A549 (cell line): ENCODE measurements at regions of chr5 and their contacts with region 1.

Region 1: GRCh38 chr5:58849921-58850667 is 267.2 kb downstream of the RAB3C start:
- DNase-seq: peak; percentile 54 to 64
- ATAC-seq: peak; percentile 92 to 94
- H3K4me3 ChIP-seq: no peak overlapping the region
- H3K27ac ChIP-seq: no peak overlapping the region
- H3K4me1 ChIP-seq: peaks cover 8% of the 10 kb centered on the region; the same call in 2 of the 3 replicates
- CTCF ChIP-seq: peak; percentile 60
- EP300 ChIP-seq: no peak
- POLR2A ChIP-seq: no peak
- RAD21 ChIP-seq: peak; percentile 79 to 83

Region 2: DNA sequence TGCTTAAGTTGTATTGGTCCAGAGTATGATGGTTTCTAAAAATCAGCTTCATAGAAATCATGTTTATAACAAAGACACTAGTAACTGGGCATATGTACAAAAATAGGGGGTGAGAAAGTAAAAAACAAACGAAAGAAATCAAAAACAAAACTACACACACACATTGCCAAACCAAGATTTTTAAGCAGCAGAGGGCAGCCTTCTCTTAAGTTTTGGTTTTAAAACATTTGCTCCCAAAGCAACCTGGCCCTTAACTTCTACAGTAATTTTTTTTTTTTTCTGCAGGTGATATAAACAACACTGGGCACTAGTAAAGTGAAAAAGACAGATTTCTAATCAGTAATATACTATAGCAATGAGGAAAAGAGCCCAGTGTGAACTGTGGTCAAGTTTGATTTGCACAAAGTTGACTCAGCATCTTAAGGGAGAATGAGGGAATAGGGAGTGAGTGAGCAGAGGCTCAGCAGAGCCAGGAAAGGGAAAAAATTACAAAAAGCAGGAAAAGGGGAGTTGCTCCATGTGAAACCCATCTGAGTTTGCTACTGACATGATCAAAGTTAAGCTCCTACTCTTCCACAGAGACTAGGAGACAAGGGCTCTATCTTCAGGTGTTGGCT is 372.2 kb before region 1 on chr5:
- CTCF ChIA-PET with region 1: interaction called, 80 read pairs
- POLR2A ChIA-PET with region 1: no interaction called
- DNase-seq: no peak
- ATAC-seq: peak in 1 of 2 experiments; percentile 61; a peak in 3 of 6 replicates
- H3K4me3 ChIP-seq: no peak overlapping the region
- H3K27ac ChIP-seq: no peak overlapping the region
- H3K4me1 ChIP-seq: 0 out of 3 replicates have a peak, but pooled peaks cover 3% of the 10 kb centered on the region
- CTCF ChIP-seq: peak; percentile 70
- EP300 ChIP-seq: no peak
- POLR2A ChIP-seq: no peak
- RAD21 ChIP-seq: peak; percentile 68 to 75

Region 3: GRCh38 chr5:58484505-58484904 is 365.6 kb before region 1 on chr5:
- CTCF ChIA-PET with region 1: interaction called, 266 read pairs
- POLR2A ChIA-PET with region 1: no interaction called
- DNase-seq: no peak
- ATAC-seq: no peak
- H3K4me3 ChIP-seq: no peak overlapping the region
- H3K27ac ChIP-seq: no peak overlapping the region
- H3K4me1 ChIP-seq: no peaks in the 10 kb centered on the region
- CTCF ChIP-seq: no peak
- EP300 ChIP-seq: no peak
- POLR2A ChIP-seq: no peak
- RAD21 ChIP-seq: no peak

Region 4: DNA sequence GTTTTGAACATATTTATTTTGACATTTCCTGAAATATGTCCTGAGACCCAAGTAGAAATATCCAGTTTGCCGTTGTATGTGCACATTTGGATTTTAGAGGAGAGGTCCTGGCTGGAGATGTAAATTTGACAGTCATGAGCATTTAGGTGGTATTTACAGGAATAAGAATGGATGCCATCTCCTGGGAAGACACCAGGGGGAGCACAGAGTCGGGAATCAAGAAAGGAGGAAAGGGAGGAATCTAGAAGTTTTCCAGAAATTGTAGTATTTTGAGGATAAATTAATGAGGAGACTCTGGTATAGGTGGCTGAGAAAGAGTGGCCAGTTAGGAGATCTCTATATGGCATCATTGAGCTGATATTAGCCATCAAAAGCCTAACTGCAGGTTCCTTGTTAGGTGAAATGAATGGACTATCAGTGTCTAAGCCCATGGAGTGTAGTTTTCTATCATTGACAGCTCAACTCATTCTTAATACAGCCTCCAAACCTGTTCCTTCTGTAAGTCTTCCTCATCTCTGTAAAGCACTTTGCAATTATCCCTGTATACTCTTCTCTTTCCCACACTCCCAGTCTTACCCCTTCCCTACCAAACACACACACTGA is 351.7 kb before region 1 on chr5:
- CTCF ChIA-PET with region 1: interaction called, 266 read pairs
- POLR2A ChIA-PET with region 1: no interaction called
- DNase-seq: peak; percentile 28 to 53
- ATAC-seq: peak; percentile 64 to 81; a peak in 4 of 6 replicates
- H3K4me3 ChIP-seq: no peak overlapping the region
- H3K27ac ChIP-seq: no peak overlapping the region
- H3K4me1 ChIP-seq: no peaks in the 10 kb centered on the region
- CTCF ChIP-seq: peak; percentile 81
- EP300 ChIP-seq: no peak
- POLR2A ChIP-seq: no peak
- RAD21 ChIP-seq: peak; percentile 73 to 77

Region 5: GRCh38 chr5:58759745-58760144 is 90.3 kb before region 1 on chr5:
- CTCF ChIA-PET with region 1: no interaction called
- POLR2A ChIA-PET with region 1: no interaction called
- DNase-seq: no peak
- ATAC-seq: no peak
- H3K4me3 ChIP-seq: peak overlapping the region; percentile 27; the same call in 1 of the 3 replicates
- H3K27ac ChIP-seq: no peak overlapping the region
- H3K4me1 ChIP-seq: no peaks in the 10 kb centered on the region
- CTCF ChIP-seq: no peak
- EP300 ChIP-seq: no peak
- POLR2A ChIP-seq: no peak
- RAD21 ChIP-seq: no peak

Region 6: GRCh38 chr5:58834242-58835225 is 15.6 kb before region 1 on chr5:
- CTCF ChIA-PET with region 1: interaction called, 30 read pairs
- POLR2A ChIA-PET with region 1: no interaction called
- DNase-seq: no peak
- ATAC-seq: 0 out of 6 replicates have a peak, but pooled peaks of 1 of the 2 experiments have one; percentile 13
- H3K4me3 ChIP-seq: no peak overlapping the region
- H3K27ac ChIP-seq: no peak overlapping the region
- H3K4me1 ChIP-seq: no peaks in the 10 kb centered on the region
- CTCF ChIP-seq: no peak
- EP300 ChIP-seq: no peak
- POLR2A ChIP-seq: no peak
- RAD21 ChIP-seq: no peak